ENCODE measurements at regions of chr1 and their contacts with region 1.

Region 1: DNA sequence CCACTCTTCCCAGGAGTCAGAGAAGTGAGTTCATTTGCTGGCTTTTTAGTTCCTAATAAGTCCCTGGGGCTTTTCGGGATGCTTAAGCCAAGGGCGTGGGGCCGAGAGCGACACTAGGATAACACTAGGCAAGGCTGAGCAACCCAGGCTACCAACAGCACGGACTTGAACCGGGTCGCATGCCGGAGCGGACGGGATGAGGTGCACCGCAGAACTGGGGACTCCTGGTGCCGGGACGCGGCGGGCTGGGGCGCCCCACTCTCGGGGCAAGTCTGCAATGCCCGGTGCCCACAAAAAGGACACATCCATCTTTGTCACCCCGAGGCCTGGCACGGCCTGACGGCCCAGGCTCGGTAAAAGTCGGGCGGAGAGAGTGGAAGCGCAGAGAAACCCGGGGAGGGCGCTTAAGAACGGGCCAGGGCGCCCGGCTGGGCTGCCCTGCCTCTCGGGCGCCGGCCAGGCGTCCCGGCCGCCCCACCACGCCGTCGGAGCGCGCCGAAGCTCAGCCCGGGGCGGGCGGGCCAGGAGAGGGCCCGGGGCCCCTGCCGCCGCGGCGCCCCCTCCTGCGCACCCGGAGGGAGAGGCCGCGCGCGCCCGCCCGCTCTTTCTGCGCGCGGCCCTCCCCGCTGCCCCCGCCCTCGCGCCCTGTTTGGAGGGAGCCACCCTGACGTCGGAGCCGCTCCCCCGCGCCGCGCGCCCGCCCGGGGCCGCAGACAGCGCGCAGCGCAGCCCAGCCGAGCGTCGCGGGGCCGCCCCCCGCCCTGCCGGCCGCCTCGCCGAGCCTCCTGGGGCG is at the start of gene NBL1:
- DNase-seq: no peak
- H3K4me3 ChIP-seq: peak within 1 kb of the TSS; percentile 70 to 94 (median 92)
- H3K27ac ChIP-seq: peak within 1 kb of the TSS; percentile 97 to 99 (median 98)
- H3K4me1 ChIP-seq: peaks cover 45 to 71% (median 68%) of the 10 kb centered on the region in 4 donors
- H3K27me3 ChIP-seq: no peaks in the 10 kb centered on the region
- CTCF ChIP-seq: no peak
- EP300 ChIP-seq: no peak
- POLR2A ChIP-seq: no peak
- total RNA-seq, gene NBL1: 194 to 469 (median 307) TPM

Region 2: GRCh38 chr1:19485362-19486187 is 158.2 kb before region 1 on chr1 and contains the start of gene CAPZB:
- intact Hi-C with region 1: loop called (anchors 2 kb)
- DNase-seq: peak; percentile 97
- H3K4me3 ChIP-seq: peak within 1 kb of the TSS; percentile 96 to 100 (median 100)
- H3K27ac ChIP-seq: peak within 1 kb of the TSS; percentile 100
- H3K4me1 ChIP-seq: peaks cover 59 to 70% (median 65%) of the 10 kb centered on the region in 4 donors
- H3K27me3 ChIP-seq: no peaks in the 10 kb centered on the region
- CTCF ChIP-seq: no peak
- EP300 ChIP-seq: no peak
- POLR2A ChIP-seq: peak; percentile 83
- total RNA-seq, gene CAPZB: 186 to 261 (median 203) TPM

Region 3: GRCh38 chr1:19596714-19597495 is 46.9 kb before region 1 on chr1:
- intact Hi-C with region 1: loop called (anchors 5 kb)
- DNase-seq: peak; percentile 99
- H3K4me3 ChIP-seq: peak overlapping the region; percentile 69 to 94 (median 88)
- H3K27ac ChIP-seq: peak overlapping the region; percentile 87 to 96 (median 94)
- H3K4me1 ChIP-seq: peaks cover 29 to 62% (median 55%) of the 10 kb centered on the region in 4 donors
- H3K27me3 ChIP-seq: peaks cover 0 to 3% (median 0%) of the 10 kb centered on the region in 4 donors
- CTCF ChIP-seq: no peak
- EP300 ChIP-seq: no peak
- POLR2A ChIP-seq: peak; percentile 61

Measured in esophagus muscularis mucosa (tissue), 4 donors.